Posterior cingulate gyrus (tissue), 11 donors: ENCODE measurements at regions of chr4 and their contacts with region 1.

Region 1: DNA sequence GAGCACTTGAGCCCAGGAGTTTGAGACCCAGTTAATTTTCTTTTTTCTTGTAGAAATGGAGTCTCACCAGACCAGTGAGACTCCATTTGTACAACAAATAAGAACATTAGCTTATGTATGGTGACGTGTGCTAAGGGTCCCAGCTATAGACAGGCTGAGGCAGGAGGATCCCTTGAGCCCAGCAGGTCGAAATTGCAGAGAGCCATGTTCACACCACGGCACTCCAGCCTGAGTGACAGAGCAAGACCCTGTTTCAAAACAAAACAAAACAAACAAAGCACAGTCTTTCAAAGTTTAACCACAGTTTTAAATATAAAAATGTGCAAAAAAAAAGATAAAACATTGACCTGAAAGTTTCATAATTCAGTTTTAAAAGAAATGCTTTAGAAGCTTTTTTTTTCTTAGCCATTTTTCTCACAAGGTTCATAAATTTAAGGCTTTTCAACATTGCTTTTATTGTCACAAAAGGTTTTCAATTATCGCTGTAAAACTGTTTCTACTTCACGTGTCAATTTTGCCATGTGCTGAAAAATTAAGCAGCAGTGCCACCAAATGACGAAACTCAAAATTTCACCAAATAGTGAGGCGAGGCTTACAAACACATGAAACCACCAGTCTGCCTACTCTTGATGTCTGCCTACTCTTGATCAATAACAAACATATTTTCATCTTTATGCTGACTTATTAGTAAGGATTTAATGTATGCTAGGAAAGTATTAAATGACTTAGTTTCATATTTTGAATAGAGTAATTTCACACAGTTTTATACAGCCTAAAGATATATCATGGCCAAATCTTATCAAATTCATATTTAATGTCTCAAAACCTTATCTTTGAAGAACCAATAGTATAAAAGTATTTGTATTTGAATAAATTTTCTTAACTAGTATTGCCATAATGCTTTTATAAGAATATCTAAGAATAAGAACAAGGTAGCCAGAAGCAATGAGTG is 126.3 kb downstream of the NEK1 start:
- DNase-seq: peak in 4 of 10 donors; percentile 10 to 63 (median 28)

Region 2: DNA sequence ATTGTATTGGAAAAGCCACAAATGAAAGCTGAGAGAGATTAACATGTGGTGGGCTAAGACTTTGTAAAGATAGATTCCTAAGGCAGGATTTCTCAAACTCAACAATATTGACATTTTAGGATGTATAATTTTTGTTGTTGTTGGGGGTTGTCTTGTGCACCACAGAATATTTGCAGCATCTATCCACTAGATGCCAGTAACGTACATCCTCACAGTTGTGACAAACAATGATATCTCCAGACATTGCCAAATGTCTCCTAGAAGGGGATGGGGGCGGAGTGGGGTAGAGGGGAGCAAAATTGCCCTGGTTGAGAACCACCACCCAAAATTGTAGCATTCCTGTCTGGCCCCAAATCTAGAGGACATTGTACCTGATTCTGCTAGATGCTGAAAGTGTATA is 461.3 kb before region 1 on chr4:
- intact Hi-C with region 1: loop called (anchors 2 kb)
- DNase-seq: no peak

Region 3: GRCh38 chr4:169906104-169906503 is 420.0 kb after region 1 on chr4:
- intact Hi-C with region 1: no loop called
- DNase-seq: no peak